A549 (cell line): ENCODE measurements at regions of chr12 and their contacts with region 1.

Region 1: GRCh38 chr12:2944401-2945047 is 14.7 kb upstream of the TEAD4 start:
- DNase-seq: peak; percentile 52 to 66
- ATAC-seq: peak; percentile 91
- H3K4me3 ChIP-seq: peak overlapping the region; percentile 42
- H3K27ac ChIP-seq: peak overlapping the region; percentile 46 to 75
- H3K4me1 ChIP-seq: no peaks in the 10 kb centered on the region
- CTCF ChIP-seq: peak; percentile 79
- EP300 ChIP-seq: no peak
- POLR2A ChIP-seq: no peak
- RAD21 ChIP-seq: peak; percentile 76 to 90

Region 2: DNA sequence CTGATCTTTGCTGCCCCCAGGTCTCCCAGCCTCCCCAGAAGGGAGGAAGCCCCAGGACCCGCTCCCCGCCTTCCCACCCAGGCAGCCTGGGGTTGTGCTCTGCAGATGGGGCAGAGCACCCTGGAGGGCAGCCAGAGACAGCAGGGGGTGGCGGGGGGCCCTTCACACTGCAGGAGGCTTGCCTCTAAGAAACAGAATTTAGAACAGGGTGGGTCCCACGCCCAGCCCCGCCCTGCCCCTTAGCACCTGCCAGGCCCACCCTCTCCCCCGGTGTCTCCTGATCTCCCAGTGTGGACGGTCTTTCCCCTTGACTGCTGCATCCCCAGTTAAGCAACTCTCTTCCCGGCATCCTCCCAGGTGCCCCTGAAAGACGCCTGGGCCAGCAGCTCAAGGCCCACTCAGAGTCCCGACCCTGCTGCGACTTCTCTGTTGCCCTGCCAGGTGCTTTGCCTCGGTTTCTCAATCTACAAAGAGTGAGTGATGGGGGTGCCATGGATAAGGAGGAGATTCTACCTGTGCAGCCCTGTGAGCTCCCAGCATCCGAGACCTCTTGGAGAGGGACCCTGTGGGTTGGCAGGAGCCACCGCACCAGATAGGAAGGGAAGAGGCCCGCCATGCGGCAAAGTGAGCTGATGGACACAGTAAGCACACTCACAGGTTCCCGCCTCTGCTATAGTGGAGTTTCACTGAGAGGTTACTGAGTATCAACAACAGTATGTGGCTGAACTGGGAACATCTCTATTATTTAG is 476.9 kb before region 1 on chr12:
- CTCF ChIA-PET with region 1: no interaction called
- POLR2A ChIA-PET with region 1: no interaction called
- DNase-seq: no peak
- ATAC-seq: no peak
- H3K4me3 ChIP-seq: no peak overlapping the region
- H3K27ac ChIP-seq: no peak overlapping the region
- H3K4me1 ChIP-seq: no peaks in the 10 kb centered on the region
- CTCF ChIP-seq: no peak
- EP300 ChIP-seq: no peak
- POLR2A ChIP-seq: no peak
- RAD21 ChIP-seq: no peak

Region 3: GRCh38 chr12:2884810-2885209 is 59.7 kb before region 1 on chr12:
- CTCF ChIA-PET with region 1: interaction called, 70 read pairs
- POLR2A ChIA-PET with region 1: no interaction called
- DNase-seq: no peak
- ATAC-seq: peak; percentile 54 to 59
- H3K4me3 ChIP-seq: no peak overlapping the region
- H3K27ac ChIP-seq: no peak overlapping the region
- H3K4me1 ChIP-seq: peaks cover 15% of the 10 kb centered on the region
- CTCF ChIP-seq: no peak
- EP300 ChIP-seq: no peak
- POLR2A ChIP-seq: no peak
- RAD21 ChIP-seq: no peak

Region 4: GRCh38 chr12:2924019-2924418 is 20.5 kb before region 1 on chr12:
- CTCF ChIA-PET with region 1: interaction called, 22 read pairs
- POLR2A ChIA-PET with region 1: no interaction called
- DNase-seq: no peak
- ATAC-seq: no peak
- H3K4me3 ChIP-seq: no peak overlapping the region
- H3K27ac ChIP-seq: no peak overlapping the region
- H3K4me1 ChIP-seq: no peaks in the 10 kb centered on the region
- CTCF ChIP-seq: no peak
- EP300 ChIP-seq: no peak
- POLR2A ChIP-seq: no peak
- RAD21 ChIP-seq: no peak

Region 5: GRCh38 chr12:2959192-2959504 is 14.6 kb after region 1 on chr12 and contains the start of gene TEAD4:
- CTCF ChIA-PET with region 1: interaction called, 28 read pairs
- POLR2A ChIA-PET with region 1: interaction called, 5 read pairs
- DNase-seq: peak; percentile 89 to 90
- ATAC-seq: peak; percentile 66 to 76
- H3K4me3 ChIP-seq: peak within 1 kb of the TSS; percentile 86
- H3K27ac ChIP-seq: peak within 1 kb of the TSS; percentile 98 to 99
- H3K4me1 ChIP-seq: peaks cover 28% of the 10 kb centered on the region
- CTCF ChIP-seq: no peak
- EP300 ChIP-seq: no peak
- POLR2A ChIP-seq: peak; percentile 69
- RAD21 ChIP-seq: no peak
- polyA plus RNA-seq, gene TEAD4: 22.0 and 22.6 TPM in 2 replicates

Region 6: GRCh38 chr12:2982127-2982760 is 37.7 kb after region 1 on chr12:
- CTCF ChIA-PET with region 1: interaction called, 11 read pairs
- POLR2A ChIA-PET with region 1: no interaction called
- DNase-seq: no peak
- ATAC-seq: no peak
- H3K4me3 ChIP-seq: no peak overlapping the region
- H3K27ac ChIP-seq: no peak overlapping the region
- H3K4me1 ChIP-seq: no peaks in the 10 kb centered on the region
- CTCF ChIP-seq: no peak
- EP300 ChIP-seq: no peak
- POLR2A ChIP-seq: no peak
- RAD21 ChIP-seq: no peak